ENCODE measurements at regions of chr6 and their contacts with region 1.

Region 1: DNA sequence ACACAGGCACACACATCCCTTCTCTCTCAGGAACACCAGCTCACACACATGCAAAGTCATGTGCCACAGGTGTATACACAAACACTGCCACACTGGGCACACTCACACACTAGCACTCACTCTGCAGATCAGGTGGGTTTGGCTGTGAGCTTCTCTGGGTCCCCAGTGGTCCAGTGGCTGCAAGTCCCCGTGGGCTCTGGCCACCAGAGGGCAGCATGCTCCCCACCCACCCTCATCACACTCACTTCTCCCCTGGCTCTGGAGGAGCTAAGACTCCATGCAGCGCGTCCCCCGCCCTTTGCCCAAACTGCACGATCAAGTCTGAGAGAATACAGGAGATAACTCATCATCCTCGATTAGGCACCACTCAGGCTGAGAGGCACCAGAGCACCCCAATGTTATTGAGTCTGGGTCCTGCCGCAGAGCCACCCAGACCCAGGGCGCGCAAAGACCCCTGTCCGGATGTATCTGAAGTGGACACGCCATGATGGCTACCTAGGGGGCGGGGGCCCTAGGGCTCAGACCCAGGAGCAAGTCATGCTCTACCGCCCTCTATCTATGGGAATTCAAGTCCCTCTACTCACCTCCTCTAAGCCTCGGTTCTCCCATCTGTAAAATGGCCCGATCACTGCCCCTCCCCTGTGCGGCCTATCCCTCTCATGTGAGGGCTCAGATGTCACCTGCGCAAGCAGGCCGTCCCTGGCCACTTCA is 90.5 kb downstream of the GRM4 start:
- DNase-seq: peak; percentile 25
- H3K4me3 ChIP-seq: no peak overlapping the region
- H3K27ac ChIP-seq: no peak overlapping the region
- H3K4me1 ChIP-seq: no peaks in the 10 kb centered on the region
- H3K27me3 ChIP-seq: no peaks in the 10 kb centered on the region
- CTCF ChIP-seq: peak; percentile 77 to 83

Region 2: GRCh38 chr6:33950472-33950881 is 104.9 kb before region 1 on chr6:
- CTCF ChIA-PET with region 1: no interaction called
- dilution Hi-C with region 1: no loop called
- in situ Hi-C with region 1: no loop called
- intact Hi-C with region 1: no loop called
- DNase-seq: peak; percentile 26
- H3K4me3 ChIP-seq: no peak overlapping the region
- H3K27ac ChIP-seq: no peak overlapping the region
- H3K4me1 ChIP-seq: no peaks in the 10 kb centered on the region
- H3K27me3 ChIP-seq: no peaks in the 10 kb centered on the region
- CTCF ChIP-seq: no peak

Region 3: GRCh38 chr6:34154668-34155447 is 99.5 kb after region 1 on chr6:
- CTCF ChIA-PET with region 1: no interaction called
- dilution Hi-C with region 1: no loop called
- in situ Hi-C with region 1: loop called (anchors 10 kb)
- intact Hi-C with region 1: loop called (anchors 1 kb)
- DNase-seq: no peak
- H3K4me3 ChIP-seq: peak overlapping the region in 1 of 3 experiments; percentile 34
- H3K27ac ChIP-seq: no peak overlapping the region
- H3K4me1 ChIP-seq: peaks cover 8% of the 10 kb centered on the region
- H3K27me3 ChIP-seq: peaks cover 5% of the 10 kb centered on the region
- CTCF ChIP-seq: peak; percentile 86 to 99

Measured in mammary epithelial cell (primary cell).